IMR-90 (cell line): ENCODE measurements at regions of chr14 and their contacts with region 1.

Region 1: DNA sequence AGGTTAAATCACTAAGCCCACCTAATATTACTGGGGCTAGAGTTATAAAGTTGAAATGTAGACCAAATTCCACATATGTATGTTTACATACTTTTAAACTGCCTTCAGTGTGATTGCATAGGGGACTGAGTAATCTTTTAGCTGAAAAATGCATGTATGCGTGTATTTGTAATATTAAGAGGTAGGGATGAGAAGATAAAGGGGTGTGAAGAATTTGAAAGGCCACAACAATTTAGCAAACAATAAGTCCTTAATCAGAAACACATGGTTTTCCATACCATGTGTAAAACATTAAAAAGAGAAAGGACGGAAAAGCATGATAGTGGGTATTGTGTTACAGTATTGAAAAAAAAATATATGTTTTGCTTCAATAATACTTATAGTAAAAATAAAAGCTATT is 919.9 kb upstream of the FLRT2 start:
- DNase-seq: no peak
- ATAC-seq: 0 out of 2 replicates have a peak, but pooled peaks have one; percentile 24
- H3K4me3 ChIP-seq: no peak overlapping the region
- H3K27ac ChIP-seq: no peak overlapping the region
- H3K4me1 ChIP-seq: no peaks in the 10 kb centered on the region
- H3K27me3 ChIP-seq: no peaks in the 10 kb centered on the region
- CTCF ChIP-seq: no peak
- POLR2A ChIP-seq: no peak
- RAD21 ChIP-seq: no peak

Region 2: GRCh38 chr14:83977583-83977982 is 632.5 kb before region 1 on chr14:
- CTCF ChIA-PET with region 1: no interaction called
- POLR2A ChIA-PET with region 1: interaction called, 16 read pairs
- dilution Hi-C with region 1: no loop called
- in situ Hi-C with region 1: no loop called
- intact Hi-C with region 1: no loop called
- DNase-seq: no peak
- ATAC-seq: no peak
- H3K4me3 ChIP-seq: no peak overlapping the region
- H3K27ac ChIP-seq: no peak overlapping the region
- H3K4me1 ChIP-seq: peaks cover 9% of the 10 kb centered on the region
- H3K27me3 ChIP-seq: no peaks in the 10 kb centered on the region
- CTCF ChIP-seq: no peak
- POLR2A ChIP-seq: no peak
- RAD21 ChIP-seq: no peak

Region 3: DNA sequence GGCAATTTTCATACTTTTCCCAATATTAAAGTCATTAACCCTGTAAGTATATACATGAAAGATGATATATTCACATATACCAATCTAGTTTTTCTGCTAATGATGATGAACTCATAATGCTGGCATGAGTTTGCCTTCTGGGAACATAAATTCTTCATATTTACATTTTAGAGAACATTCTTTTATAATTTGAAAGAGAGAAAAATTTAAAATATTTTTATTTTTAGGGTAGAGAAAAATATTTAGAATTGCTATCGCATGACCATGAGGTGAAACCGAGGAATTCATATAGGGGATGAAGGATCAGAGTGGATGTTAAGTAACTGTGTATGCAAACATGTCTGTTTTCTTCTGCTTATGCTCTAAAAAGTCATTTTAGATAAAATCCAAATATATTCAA is 94.5 kb after region 1 on chr14:
- CTCF ChIA-PET with region 1: no interaction called
- POLR2A ChIA-PET with region 1: no interaction called
- dilution Hi-C with region 1: no loop called
- in situ Hi-C with region 1: no loop called
- intact Hi-C with region 1: no loop called
- DNase-seq: no peak
- ATAC-seq: no peak
- H3K4me3 ChIP-seq: no peak overlapping the region
- H3K27ac ChIP-seq: no peak overlapping the region
- H3K4me1 ChIP-seq: no peaks in the 10 kb centered on the region
- H3K27me3 ChIP-seq: no peaks in the 10 kb centered on the region
- CTCF ChIP-seq: no peak
- POLR2A ChIP-seq: no peak
- RAD21 ChIP-seq: no peak